ENCODE measurements at regions of chr15 and their contacts with region 1.

Region 1: DNA sequence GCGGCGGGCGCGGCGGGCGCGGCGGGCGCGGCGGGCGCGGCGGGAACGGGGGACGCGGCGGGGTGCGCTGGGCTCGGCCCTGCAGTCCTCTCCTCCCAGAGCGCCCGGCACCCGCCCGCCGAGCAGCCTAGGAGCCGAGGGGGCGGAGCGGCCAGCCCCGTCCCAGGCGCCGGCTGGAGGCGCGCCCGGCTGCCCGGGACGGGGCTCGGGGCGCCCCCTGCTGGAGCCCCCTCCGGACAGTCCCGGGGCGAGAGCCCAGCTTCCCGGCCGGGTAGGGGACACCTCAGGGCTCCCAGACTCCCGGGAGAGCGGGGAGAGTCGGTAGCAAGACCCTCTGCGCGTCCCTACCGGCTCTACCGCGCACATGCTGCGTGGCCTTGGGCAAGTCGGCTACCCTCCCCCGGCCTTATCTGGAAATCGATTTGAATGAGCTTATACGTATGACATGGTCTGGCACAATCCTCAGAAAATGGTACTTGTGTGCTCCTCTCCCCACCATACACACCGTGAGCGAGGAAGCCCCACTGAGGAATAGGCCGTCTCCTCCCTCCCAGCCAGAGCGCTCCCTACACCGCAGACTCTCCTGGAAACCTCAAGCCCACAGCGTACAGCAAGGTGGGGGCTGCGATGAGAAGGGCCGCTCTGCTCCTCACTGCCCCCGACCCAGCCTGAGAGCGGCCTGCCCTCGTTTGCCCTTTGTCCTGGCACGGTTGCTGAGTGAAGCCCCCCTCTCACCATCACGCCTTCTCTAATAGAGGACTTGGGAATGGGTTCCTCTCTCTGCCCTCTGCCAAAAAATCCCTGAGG is at the start of gene DAPK2:
- DNase-seq: peak; percentile 69
- H3K4me3 Mint-ChIP-seq: peak within 1 kb of the TSS; percentile 63
- H3K27ac Mint-ChIP-seq: no peak within 1 kb of the TSS
- H3K4me1 Mint-ChIP-seq: peaks cover 6% of the 10 kb centered on the region
- H3K27me3 Mint-ChIP-seq: peaks cover 11% of the 10 kb centered on the region
- total RNA-seq, gene DAPK2: 3.2 to 3.7 TPM

Region 2: GRCh38 chr15:63752075-63752684 is 294.4 kb before region 1 on chr15:
- CTCF ChIA-PET with region 1: interaction called, 80 read pairs
- POLR2A ChIA-PET with region 1: interaction called, 7 read pairs
- DNase-seq: peak; percentile 38
- H3K4me3 Mint-ChIP-seq: no peak overlapping the region
- H3K27ac Mint-ChIP-seq: no peak overlapping the region
- H3K4me1 Mint-ChIP-seq: no peaks in the 10 kb centered on the region
- H3K27me3 Mint-ChIP-seq: no peaks in the 10 kb centered on the region

Region 3: GRCh38 chr15:63805993-63806980 is 240.3 kb before region 1 on chr15:
- CTCF ChIA-PET with region 1: no interaction called
- POLR2A ChIA-PET with region 1: no interaction called
- DNase-seq: no peak
- H3K4me3 Mint-ChIP-seq: no peak overlapping the region
- H3K27ac Mint-ChIP-seq: peak overlapping the region; percentile 44
- H3K4me1 Mint-ChIP-seq: peaks cover 47% of the 10 kb centered on the region
- H3K27me3 Mint-ChIP-seq: no peaks in the 10 kb centered on the region

Region 4: DNA sequence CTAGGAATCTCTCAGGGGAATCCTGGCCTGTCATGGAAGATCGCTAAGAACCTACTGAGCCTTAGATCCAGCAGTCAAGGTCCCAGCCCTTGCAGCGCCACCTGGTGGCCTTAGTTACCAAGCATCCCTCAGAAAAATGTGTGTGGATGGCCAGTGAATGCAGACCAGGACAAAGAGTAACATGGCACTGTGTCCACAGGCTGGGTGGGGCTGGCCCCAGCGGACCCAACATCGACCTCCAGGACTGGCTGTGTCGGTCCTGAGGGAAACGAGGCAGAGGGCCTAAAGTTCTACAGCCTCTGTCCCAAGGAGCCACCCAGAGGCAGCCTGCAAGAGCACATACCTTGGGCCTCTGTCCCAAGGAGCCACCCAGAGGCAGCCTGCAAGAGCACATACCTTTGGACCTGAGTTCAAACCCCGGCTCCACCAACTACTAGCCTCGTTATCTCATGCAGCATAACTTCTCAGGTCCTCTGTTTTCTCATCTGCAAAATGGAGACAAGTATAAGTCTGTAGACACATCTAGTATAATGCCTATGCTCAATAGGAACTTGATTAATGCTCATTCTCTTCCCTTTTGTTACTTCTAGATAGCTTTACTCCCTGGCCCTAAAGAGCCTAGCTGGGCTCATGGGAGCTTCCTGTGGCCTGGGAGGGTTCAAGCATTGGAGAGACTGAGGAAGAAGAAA is 155.3 kb before region 1 on chr15:
- CTCF ChIA-PET with region 1: interaction called, 21 read pairs
- POLR2A ChIA-PET with region 1: no interaction called
- DNase-seq: peak; percentile 77
- H3K4me3 Mint-ChIP-seq: no peak overlapping the region
- H3K27ac Mint-ChIP-seq: peak overlapping the region; percentile 28
- H3K4me1 Mint-ChIP-seq: peaks cover 46% of the 10 kb centered on the region
- H3K27me3 Mint-ChIP-seq: no peaks in the 10 kb centered on the region

Region 5: DNA sequence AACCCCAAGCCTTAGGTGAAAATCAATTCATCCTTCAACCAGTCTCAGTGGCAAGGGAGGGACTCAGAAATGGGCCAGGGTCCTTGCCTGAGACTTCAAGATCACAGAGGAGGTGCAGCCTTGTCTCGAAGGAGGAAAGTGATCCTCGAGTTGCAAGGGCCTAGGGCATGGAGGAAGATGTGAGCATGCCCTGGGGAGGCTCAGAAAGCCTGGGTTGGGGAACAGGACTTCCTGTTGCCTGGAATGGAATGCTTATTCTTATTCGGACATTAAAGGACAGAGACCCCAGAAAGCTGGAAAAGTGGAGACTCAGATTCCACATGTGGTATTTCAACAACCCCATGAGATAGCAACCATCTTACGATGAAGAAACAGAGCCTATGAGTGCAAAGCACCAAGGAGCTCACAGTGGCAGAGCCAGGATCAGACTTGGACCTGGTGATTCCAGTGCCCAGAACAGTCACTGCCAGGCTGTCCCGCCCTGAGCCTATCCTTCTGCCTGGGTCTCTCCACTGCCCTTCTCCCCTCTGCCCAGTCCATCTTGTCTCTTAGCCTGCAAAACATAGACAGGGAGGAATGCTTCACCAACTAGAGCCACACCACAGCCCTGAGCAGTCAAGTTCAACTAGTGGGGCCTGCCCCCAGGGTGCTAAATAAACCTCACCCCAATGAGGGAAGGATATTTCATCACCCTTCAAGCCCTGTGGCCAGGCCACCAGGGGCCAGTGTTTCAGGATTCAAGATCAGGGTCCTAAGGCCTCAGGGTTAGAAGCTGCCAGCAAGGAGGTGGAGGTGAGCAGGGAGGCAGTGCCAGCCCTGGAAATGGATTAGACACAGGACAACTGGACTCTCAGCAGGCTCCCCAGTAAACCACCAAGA is 22.1 kb before region 1 on chr15:
- CTCF ChIA-PET with region 1: interaction called, 12 read pairs
- POLR2A ChIA-PET with region 1: no interaction called
- DNase-seq: no peak
- H3K4me3 Mint-ChIP-seq: no peak overlapping the region
- H3K27ac Mint-ChIP-seq: no peak overlapping the region
- H3K4me1 Mint-ChIP-seq: peaks cover 3% of the 10 kb centered on the region
- H3K27me3 Mint-ChIP-seq: no peaks in the 10 kb centered on the region

Region 6: DNA sequence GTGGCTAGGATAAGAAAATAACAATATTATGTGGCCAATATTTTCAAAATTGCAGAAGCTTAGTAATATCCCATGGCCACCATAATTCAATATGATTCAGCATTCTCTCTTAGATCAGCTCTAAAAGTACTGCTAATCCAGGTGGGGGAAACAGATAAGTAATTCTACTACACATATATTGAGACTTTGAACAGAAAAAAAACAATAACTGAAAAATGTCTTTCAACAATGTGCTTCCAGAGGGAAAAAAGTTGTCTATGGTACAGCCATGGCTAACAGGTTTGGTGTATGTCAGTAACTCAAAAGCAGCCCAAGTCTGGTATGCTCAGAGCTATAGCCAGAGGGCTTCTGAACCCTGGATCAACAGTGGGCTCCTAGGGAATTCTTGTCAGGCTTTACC is 158.7 kb after region 1 on chr15:
- CTCF ChIA-PET with region 1: no interaction called
- POLR2A ChIA-PET with region 1: no interaction called
- DNase-seq: no peak
- H3K4me3 Mint-ChIP-seq: no peak overlapping the region
- H3K27ac Mint-ChIP-seq: no peak overlapping the region
- H3K4me1 Mint-ChIP-seq: peaks cover 5% of the 10 kb centered on the region
- H3K27me3 Mint-ChIP-seq: no peaks in the 10 kb centered on the region